IMR-90 (cell line): ENCODE measurements at regions of chr1 and their contacts with region 1.

Region 1: GRCh38 chr1:32964461-32965250 is at the start of gene RNF19B:
- DNase-seq: peak; percentile 89
- ATAC-seq: peak; percentile 96
- H3K4me3 ChIP-seq: peak within 1 kb of the TSS; percentile 94
- H3K27ac ChIP-seq: peak within 1 kb of the TSS; percentile 65
- H3K4me1 ChIP-seq: peaks cover 16% of the 10 kb centered on the region
- H3K27me3 ChIP-seq: no peaks in the 10 kb centered on the region
- CTCF ChIP-seq: no peak
- POLR2A ChIP-seq: peak; percentile 97
- RAD21 ChIP-seq: no peak
- total RNA-seq, gene RNF19B: 9.2 and 10.0 TPM in 2 replicates

Region 2: DNA sequence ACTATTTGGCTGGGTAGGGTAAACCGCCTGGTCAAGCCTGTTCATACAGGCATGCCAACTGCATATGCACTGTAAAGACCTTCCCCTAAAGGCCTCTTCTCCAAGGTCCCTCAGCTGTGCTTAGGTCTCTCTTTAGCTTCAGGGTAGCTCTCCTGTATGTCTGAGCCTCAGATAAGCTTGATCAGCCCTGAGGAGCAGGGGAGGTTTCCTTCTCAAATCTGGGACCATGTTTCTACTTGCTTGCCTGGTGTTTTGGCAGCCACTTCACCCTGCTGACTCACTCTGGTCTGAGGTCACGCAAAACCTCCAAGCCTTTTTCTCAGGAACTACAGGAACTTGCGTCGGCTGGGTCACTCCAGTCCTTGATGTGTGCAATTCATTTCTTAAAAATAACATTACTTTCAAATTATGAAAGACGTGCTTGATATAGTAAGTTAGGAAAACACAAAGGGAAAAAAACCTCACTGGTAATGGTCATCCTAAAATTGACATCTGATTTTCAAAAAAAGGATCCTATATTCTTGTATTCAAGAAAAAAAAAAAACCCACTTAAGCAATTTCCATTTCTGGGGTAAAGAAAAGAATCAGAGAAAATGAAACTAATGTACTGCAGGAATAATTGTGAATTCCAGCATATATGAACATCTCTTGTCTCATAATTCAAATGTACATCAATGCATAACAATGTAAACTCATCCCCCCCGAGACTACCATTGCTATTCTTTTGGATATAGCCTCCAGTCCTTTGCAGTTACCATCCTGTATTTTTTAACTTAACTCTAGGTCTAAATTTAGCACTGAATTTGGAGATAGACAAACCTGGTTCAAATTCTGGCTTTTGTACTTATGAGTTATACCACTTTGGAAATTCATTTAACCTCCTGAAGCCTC is 24.7 kb after region 1 on chr1:
- CTCF ChIA-PET with region 1: no interaction called
- POLR2A ChIA-PET with region 1: no interaction called
- dilution Hi-C with region 1: no loop called
- in situ Hi-C with region 1: no loop called
- intact Hi-C with region 1: loop called (anchors 2 kb)
- DNase-seq: peak; percentile 99
- ATAC-seq: peak; percentile 63
- H3K4me3 ChIP-seq: no peak overlapping the region
- H3K27ac ChIP-seq: peak overlapping the region; percentile 79
- H3K4me1 ChIP-seq: peaks cover 25% of the 10 kb centered on the region
- H3K27me3 ChIP-seq: no peaks in the 10 kb centered on the region
- CTCF ChIP-seq: no peak
- POLR2A ChIP-seq: no peak; the same call in 1 of the 2 replicates
- RAD21 ChIP-seq: no peak

Region 3: GRCh38 chr1:33709783-33710718 is 745.4 kb after region 1 on chr1:
- CTCF ChIA-PET with region 1: no interaction called
- POLR2A ChIA-PET with region 1: no interaction called
- dilution Hi-C with region 1: no loop called
- in situ Hi-C with region 1: no loop called
- intact Hi-C with region 1: no loop called
- DNase-seq: no peak
- ATAC-seq: no peak
- H3K4me3 ChIP-seq: no peak overlapping the region
- H3K27ac ChIP-seq: no peak overlapping the region
- H3K4me1 ChIP-seq: no peaks in the 10 kb centered on the region
- H3K27me3 ChIP-seq: no peaks in the 10 kb centered on the region
- CTCF ChIP-seq: no peak
- POLR2A ChIP-seq: no peak
- RAD21 ChIP-seq: no peak